ENCODE measurements at regions of chr21 and their contacts with region 1.

Region 1: GRCh38 chr21:46184625-46185555 is 631 bp upstream of the SPATC1L start:
- DNase-seq: peak; percentile 81 to 89
- ATAC-seq: peak in 7 of 8 donors; percentile 55 to 81 (median 74)
- H3K4me3 ChIP-seq: peak overlapping the region; percentile 52 to 85 (median 66)
- H3K27ac ChIP-seq: peak overlapping the region; percentile 65 to 97 (median 82)
- H3K4me1 ChIP-seq: peaks cover 14 to 36% (median 31%) of the 10 kb centered on the region in 9 donors
- H3K27me3 ChIP-seq: no peaks in the 10 kb centered on the region
- CTCF ChIP-seq: no peak

Region 2: GRCh38 chr21:46285761-46286496 is 101.0 kb after region 1 on chr21 and contains the start of gene YBEY:
- intact Hi-C with region 1: loop called in 1 of 10 experiments (anchors 10 kb)
- DNase-seq: peak; percentile 91
- ATAC-seq: peak; percentile 97 to 98 (median 98)
- H3K4me3 ChIP-seq: peak within 1 kb of the TSS; percentile 59 to 93 (median 82)
- H3K27ac ChIP-seq: peak within 1 kb of the TSS; percentile 89 to 98 (median 94)
- H3K4me1 ChIP-seq: peaks cover 22 to 69% (median 52%) of the 10 kb centered on the region in 9 donors
- H3K27me3 ChIP-seq: no peaks in the 10 kb centered on the region
- CTCF ChIP-seq: peak in 8 of 9 donors; percentile 7 to 62 (median 38)
- total RNA-seq, gene YBEY: 11.9 to 25.7 (median 16.7) TPM

Region 3: GRCh38 chr21:46356494-46357334 is 171.8 kb after region 1 on chr21:
- intact Hi-C with region 1: no loop called
- DNase-seq: no peak
- ATAC-seq: peak in 3 of 8 donors; percentile 5 to 12 (median 11)
- H3K4me3 ChIP-seq: no peak overlapping the region
- H3K27ac ChIP-seq: no peak overlapping the region
- H3K4me1 ChIP-seq: no peaks in the 10 kb centered on the region
- H3K27me3 ChIP-seq: no peaks in the 10 kb centered on the region
- CTCF ChIP-seq: no peak